ENCODE measurements at regions of chr7 and their contacts with region 1.

Region 1: DNA sequence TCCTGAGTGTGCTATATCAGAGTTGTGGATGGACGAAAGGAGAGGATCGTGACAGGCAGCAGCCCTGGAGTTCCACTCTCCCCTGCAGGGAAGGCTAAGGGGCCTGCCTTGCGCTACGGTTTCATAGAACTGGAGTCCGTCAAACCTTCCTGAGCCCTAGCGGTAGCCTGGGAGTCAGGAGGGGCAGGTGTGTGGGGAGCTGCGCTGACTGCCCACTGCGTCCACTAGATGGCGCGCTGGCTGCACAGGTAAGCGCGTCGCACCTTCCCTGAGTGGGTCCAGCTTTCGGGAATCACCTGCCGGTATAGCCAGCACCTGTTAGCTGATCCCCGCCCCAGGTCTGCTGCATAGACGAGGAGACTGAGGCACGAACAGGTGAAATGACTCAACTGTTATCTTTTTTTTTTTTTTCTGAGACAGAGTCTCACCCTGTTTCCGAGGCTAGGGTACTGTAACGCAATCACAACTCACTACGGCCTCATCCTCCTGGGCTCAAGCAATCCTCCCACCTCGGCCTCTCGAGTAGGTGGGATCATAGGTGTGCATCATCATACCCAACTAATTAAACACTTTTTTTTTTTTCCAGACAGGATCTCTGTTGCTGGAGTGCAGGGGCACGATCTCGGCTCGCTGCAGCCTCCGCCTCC is 20.2 kb upstream of the BAIAP2L1 start:
- DNase-seq: peak; percentile 90
- ATAC-seq: peak; percentile 53
- H3K4me3 ChIP-seq: no peak overlapping the region
- H3K27ac ChIP-seq: no peak overlapping the region
- H3K4me1 ChIP-seq: peaks cover 33% of the 10 kb centered on the region
- H3K27me3 ChIP-seq: no peaks in the 10 kb centered on the region
- CTCF ChIP-seq: peak; percentile 96

Region 2: DNA sequence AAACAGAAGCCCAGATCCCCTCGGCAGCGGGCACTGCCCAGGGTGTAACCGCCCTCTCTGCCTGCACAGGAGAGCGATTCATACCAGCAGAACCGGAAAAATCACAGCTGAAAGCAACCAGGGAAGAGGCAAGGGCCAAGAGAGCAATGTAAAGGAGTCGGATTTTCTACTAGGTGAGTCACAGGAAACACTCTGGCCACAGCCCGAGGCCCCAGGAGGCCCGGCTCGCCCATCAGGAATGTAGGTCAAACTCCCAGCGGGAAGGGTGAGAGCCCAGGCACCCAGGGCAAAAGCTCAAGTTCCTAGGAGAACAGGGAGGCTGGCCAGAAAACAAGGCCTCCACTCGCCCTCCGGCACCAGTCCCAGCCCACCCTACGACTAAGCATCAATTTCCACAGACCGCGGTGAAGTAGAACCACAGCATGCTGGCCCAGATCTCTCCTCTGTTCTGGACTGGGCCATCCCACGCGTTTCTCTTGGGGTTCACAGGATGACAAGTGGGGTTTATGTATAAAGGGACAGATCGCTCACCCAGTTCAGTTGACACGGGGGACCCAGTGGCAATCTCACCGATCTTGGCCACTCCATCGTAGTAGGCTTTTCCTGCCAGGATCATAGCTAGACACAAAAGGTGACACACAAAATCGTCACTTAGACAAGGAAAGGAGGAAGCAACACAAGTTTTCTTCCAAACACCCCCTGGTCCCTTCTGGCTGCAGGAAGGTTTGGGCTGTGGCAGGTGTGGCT is 66.4 kb before region 1 on chr7:
- CTCF ChIA-PET with region 1: interaction called, 3 read pairs
- POLR2A ChIA-PET with region 1: no interaction called
- intact Hi-C with region 1: loop called (anchors 5 kb)
- DNase-seq: peak; percentile 96
- ATAC-seq: peak; percentile 85
- H3K4me3 ChIP-seq: peak overlapping the region; percentile 63
- H3K27ac ChIP-seq: peak overlapping the region; percentile 99
- H3K4me1 ChIP-seq: peaks cover 48% of the 10 kb centered on the region
- H3K27me3 ChIP-seq: no peaks in the 10 kb centered on the region
- CTCF ChIP-seq: no peak

Region 3: GRCh38 chr7:98409843-98410242 is 11.2 kb before region 1 on chr7:
- CTCF ChIA-PET with region 1: interaction called, 11 read pairs
- POLR2A ChIA-PET with region 1: interaction called, 4 read pairs
- intact Hi-C with region 1: loop called (anchors 1 kb)
- DNase-seq: peak; percentile 62
- ATAC-seq: peak; percentile 97
- H3K4me3 ChIP-seq: no peak overlapping the region
- H3K27ac ChIP-seq: peak overlapping the region; percentile 79
- H3K4me1 ChIP-seq: peaks cover 16% of the 10 kb centered on the region
- H3K27me3 ChIP-seq: no peaks in the 10 kb centered on the region
- CTCF ChIP-seq: no peak